Mammary epithelial cell (primary cell): ENCODE measurements at regions of chr18 and their contacts with region 1.

Region 1: GRCh38 chr18:48345596-48345995 is 63.6 kb downstream of the ZBTB7C start:
- DNase-seq: no peak
- H3K4me3 ChIP-seq: no peak overlapping the region
- H3K27ac ChIP-seq: no peak overlapping the region
- H3K4me1 ChIP-seq: peaks cover 11% of the 10 kb centered on the region
- H3K27me3 ChIP-seq: no peaks in the 10 kb centered on the region
- CTCF ChIP-seq: peak; percentile 45 to 67

Region 2: GRCh38 chr18:48404716-48405507 is 59.3 kb after region 1 on chr18:
- CTCF ChIA-PET with region 1: no interaction called
- dilution Hi-C with region 1: loop called (anchors 5 kb)
- in situ Hi-C with region 1: no loop called
- intact Hi-C with region 1: no loop called
- DNase-seq: peak; percentile 75
- H3K4me3 ChIP-seq: no peak overlapping the region
- H3K27ac ChIP-seq: no peak overlapping the region
- H3K4me1 ChIP-seq: peaks cover 40% of the 10 kb centered on the region
- H3K27me3 ChIP-seq: no peaks in the 10 kb centered on the region
- CTCF ChIP-seq: no peak

Region 3: DNA sequence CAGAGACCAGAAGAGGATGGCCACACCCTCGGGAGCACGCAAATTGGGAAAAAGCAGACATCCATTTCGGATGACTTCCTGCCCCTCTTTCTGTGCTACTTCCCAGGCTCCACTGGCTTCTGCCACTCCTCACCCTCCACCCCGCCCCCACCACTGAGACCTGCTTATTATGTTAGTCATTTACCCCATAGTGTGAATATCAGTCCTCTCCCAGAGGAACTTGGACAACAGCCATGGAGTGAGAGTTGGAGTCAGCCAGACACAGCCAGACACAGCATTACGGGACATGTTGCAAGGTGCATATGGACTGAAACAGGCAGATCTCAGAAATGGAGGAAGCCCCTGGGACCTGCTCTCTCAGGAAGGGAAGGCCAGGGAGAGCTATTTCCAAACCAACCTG is 245.1 kb after region 1 on chr18:
- CTCF ChIA-PET with region 1: no interaction called
- dilution Hi-C with region 1: no loop called
- in situ Hi-C with region 1: no loop called
- intact Hi-C with region 1: no loop called
- DNase-seq: peak; percentile 42
- H3K4me3 ChIP-seq: no peak overlapping the region
- H3K27ac ChIP-seq: no peak overlapping the region
- H3K4me1 ChIP-seq: peaks cover 14% of the 10 kb centered on the region
- H3K27me3 ChIP-seq: no peaks in the 10 kb centered on the region
- CTCF ChIP-seq: no peak